Natural killer cell (primary cell): ENCODE measurements at regions of chr6 and their contacts with region 1.

Region 1: DNA sequence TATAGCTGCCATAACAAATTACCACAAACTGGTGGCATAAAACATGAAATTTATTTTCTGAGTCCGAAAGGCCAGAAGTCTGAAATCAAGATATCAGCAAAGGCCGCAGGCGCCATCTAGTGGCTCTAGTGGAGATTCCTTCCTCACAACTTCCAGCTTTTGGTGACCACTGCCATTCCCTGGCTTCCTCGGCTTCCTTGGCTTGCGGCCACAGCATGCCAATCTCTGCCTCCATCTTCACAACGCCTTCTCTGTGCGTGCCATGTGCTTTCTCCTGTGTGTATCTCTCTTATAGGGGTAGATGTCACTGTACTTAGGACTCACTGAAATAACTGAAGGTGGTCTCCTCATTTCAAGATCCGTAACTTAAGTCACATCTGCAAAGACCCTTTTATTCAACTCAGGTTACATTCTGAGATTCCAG is 5.4 kb upstream of the PLAGL1 start:
- DNase-seq: peak; percentile 43 to 81
- ATAC-seq: peak; percentile 52 to 63 (median 55)
- H3K4me3 ChIP-seq: no peak overlapping the region
- H3K4me3 Mint-ChIP-seq: no peak overlapping the region
- H3K27ac ChIP-seq: no peak overlapping the region
- H3K27ac Mint-ChIP-seq: no peak overlapping the region
- H3K4me1 ChIP-seq: no peaks in the 10 kb centered on the region
- H3K4me1 Mint-ChIP-seq: peaks cover 4% of the 10 kb centered on the region in 2 donors
- H3K27me3 ChIP-seq: no peaks in the 10 kb centered on the region
- H3K27me3 Mint-ChIP-seq: peaks cover 10% of the 10 kb centered on the region in 2 donors
- CTCF ChIP-seq: peak; percentile 99

Region 2: GRCh38 chr6:142474531-142475289 is 1538.8 kb before region 1 on chr6:
- intact Hi-C with region 1: loop called (anchors 10 kb)
- DNase-seq: peak in 1 of 2 donors; percentile 73
- ATAC-seq: peak in 2 of 3 donors; percentile 52 to 70
- H3K4me3 ChIP-seq: no peak overlapping the region
- H3K4me3 Mint-ChIP-seq: no peak overlapping the region
- H3K27ac ChIP-seq: no peak overlapping the region
- H3K27ac Mint-ChIP-seq: no peak overlapping the region
- H3K4me1 ChIP-seq: no peaks in the 10 kb centered on the region
- H3K4me1 Mint-ChIP-seq: peaks cover 6% of the 10 kb centered on the region in 2 donors
- H3K27me3 ChIP-seq: peaks cover 2% of the 10 kb centered on the region
- H3K27me3 Mint-ChIP-seq: peaks cover 5 to 8% of the 10 kb centered on the region in 2 donors
- CTCF ChIP-seq: peak; percentile 89

Region 3: DNA sequence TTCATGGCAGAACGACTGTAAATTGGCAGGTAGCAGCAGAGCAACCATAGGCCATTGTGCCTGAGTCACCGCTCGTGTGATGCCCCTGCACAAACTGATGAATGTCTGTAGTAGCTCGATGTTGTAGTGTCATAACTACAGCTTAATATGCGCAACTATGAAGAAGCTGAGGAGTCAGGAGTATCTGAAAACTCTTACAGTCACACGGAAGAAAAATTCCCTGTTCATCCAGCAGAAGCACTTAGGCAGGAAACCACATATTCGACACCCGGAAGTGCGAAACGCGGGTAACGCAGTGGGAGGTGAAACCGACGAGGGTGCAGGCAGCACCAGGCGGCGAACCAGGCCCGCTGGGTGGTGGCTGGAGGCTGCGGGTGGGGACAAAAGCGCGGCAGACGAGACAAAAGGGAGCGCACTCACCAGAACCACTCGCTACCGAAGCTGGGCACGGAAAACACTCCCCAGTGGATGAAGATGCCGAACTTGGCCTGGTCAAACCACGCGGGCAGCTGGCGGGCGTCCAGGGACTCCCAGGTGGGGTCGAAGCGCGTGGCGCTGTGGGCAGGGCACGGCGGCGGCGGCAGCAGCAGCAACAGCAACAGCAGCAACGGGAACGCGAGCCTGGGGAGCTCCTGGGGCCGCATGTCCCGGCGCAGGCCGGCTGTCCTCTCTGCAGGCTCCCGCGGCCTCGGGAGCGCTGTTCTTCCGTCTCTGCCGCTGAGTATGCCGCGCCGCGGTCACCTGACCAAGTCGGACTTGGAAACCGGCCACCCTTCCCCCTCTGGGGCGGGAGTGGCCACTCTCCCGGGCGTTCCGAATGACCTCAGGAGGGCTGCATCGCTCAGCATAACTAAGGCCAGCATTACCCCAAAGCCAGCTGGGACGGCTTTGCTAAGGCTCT is 502.3 kb before region 1 on chr6 and contains the start of gene FUCA2:
- intact Hi-C with region 1: loop called (anchors 10 kb)
- DNase-seq: peak; percentile 51 to 83
- ATAC-seq: peak; percentile 75 to 82 (median 80)
- H3K4me3 ChIP-seq: peak within 1 kb of the TSS; percentile 66
- H3K4me3 Mint-ChIP-seq: peak within 1 kb of the TSS; percentile 97
- H3K27ac ChIP-seq: peak within 1 kb of the TSS; percentile 45
- H3K27ac Mint-ChIP-seq: peak within 1 kb of the TSS; percentile 83 to 96
- H3K4me1 ChIP-seq: peaks cover 17% of the 10 kb centered on the region
- H3K4me1 Mint-ChIP-seq: peaks cover 14 to 34% of the 10 kb centered on the region in 2 donors
- H3K27me3 ChIP-seq: no peaks in the 10 kb centered on the region
- H3K27me3 Mint-ChIP-seq: peaks cover 0 to 5% of the 10 kb centered on the region in 2 donors
- CTCF ChIP-seq: no peak
- total RNA-seq, gene FUCA2: 10.5 to 15.5 (median 13.0) TPM

Region 4: DNA sequence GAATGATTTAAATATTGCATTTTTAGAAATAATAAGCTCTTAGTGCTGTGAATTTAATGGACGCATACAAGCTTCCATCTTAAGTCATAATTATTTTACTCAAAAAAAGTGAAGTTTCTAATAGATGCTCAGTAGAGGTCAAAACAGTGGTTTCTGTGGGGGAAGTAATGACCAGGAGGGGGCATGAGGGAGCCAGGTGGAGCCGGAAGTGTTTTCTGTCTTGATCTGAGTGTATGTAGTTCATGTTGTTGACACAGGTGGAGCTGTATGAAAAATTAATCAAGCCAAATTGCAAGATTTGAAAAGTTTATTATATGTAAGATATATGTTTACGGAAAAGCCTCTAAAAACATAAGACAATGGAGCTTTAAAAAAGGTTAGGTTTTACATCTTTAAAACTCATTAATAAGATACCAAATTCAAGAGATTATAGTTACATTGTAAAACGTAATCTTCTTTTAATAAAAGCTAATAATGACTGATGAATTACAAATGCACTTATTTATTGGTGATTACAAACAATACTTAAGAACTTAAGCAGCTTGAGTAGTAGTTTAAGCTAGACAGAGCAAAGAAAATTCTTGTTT is 73.4 kb before region 1 on chr6:
- intact Hi-C with region 1: loop called (anchors 1 kb)
- DNase-seq: peak; percentile 30 to 78
- ATAC-seq: peak; percentile 84 to 98 (median 96)
- H3K4me3 ChIP-seq: no peak overlapping the region
- H3K4me3 Mint-ChIP-seq: no peak overlapping the region
- H3K27ac ChIP-seq: no peak overlapping the region
- H3K27ac Mint-ChIP-seq: no peak overlapping the region
- H3K4me1 ChIP-seq: peaks cover 7% of the 10 kb centered on the region
- H3K4me1 Mint-ChIP-seq: peaks cover 10 to 15% of the 10 kb centered on the region in 2 donors
- H3K27me3 ChIP-seq: no peaks in the 10 kb centered on the region
- H3K27me3 Mint-ChIP-seq: no peaks in the 10 kb centered on the region
- CTCF ChIP-seq: peak; percentile 76